Psoas muscle (tissue), 8 donors: ENCODE measurements at regions of chr3 and their contacts with region 1.

Region 1: GRCh38 chr3:65914740-65915367 is 123.9 kb downstream of the MAGI1 start:
- DNase-seq: no peak
- ATAC-seq: peak in 2 of 4 donors; percentile 39 to 55
- H3K4me3 ChIP-seq: no peak overlapping the region
- H3K27ac ChIP-seq: no peak overlapping the region
- H3K4me1 ChIP-seq: peaks cover 7% of the 10 kb centered on the region
- H3K27me3 ChIP-seq: no peaks in the 10 kb centered on the region
- CTCF ChIP-seq: peak; percentile 7

Region 2: GRCh38 chr3:65953301-65953812 is 38.5 kb after region 1 on chr3:
- intact Hi-C with region 1: loop called in 1 of 2 experiments (anchors 1 kb)
- DNase-seq: no peak
- ATAC-seq: peak; percentile 25 to 47 (median 36)
- H3K4me3 ChIP-seq: peak overlapping the region; percentile 62
- H3K27ac ChIP-seq: peak overlapping the region; percentile 64
- H3K4me1 ChIP-seq: peaks cover 29% of the 10 kb centered on the region
- H3K27me3 ChIP-seq: no peaks in the 10 kb centered on the region
- CTCF ChIP-seq: no peak

Region 3: DNA sequence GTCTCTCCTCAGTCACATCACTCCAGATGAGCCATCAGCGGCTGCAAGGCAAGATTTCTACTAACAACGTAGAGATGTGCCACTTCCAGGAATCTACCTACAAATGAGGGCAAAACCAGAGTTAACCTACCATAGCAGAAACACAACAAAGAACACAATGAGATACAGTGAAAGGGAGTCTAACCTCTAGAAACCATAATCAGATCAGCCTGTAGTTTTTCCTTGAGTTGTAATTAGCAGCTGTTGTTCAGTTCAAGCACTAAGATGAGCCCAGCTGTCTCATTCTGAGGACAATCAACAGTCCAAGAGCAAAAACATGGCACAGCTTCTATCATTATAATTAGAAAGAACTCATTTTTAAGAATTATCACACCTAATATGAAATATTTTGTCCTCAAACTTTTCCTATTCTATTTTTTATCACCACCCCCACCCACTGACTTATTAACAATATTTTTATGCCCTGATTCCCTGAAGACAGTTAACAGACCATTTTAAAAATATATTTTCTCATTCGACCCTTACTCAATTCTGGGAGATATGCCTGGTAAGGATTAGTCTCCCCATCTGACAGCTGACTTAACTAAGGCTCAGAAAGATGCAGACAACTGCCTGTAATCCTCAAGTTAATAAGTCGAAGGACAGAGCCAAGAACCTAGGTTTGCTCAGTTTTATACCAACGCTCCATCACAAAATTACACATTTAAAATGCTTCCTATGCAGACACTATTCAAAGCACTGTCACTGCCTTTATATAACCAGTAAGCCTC is 73.7 kb after region 1 on chr3:
- intact Hi-C with region 1: no loop called
- DNase-seq: no peak
- ATAC-seq: no peak
- H3K4me3 ChIP-seq: no peak overlapping the region
- H3K27ac ChIP-seq: no peak overlapping the region
- H3K4me1 ChIP-seq: no peaks in the 10 kb centered on the region
- H3K27me3 ChIP-seq: no peaks in the 10 kb centered on the region
- CTCF ChIP-seq: no peak

Region 4: GRCh38 chr3:66021731-66022141 is 106.9 kb after region 1 on chr3:
- intact Hi-C with region 1: no loop called
- DNase-seq: no peak
- ATAC-seq: no peak
- H3K4me3 ChIP-seq: no peak overlapping the region
- H3K27ac ChIP-seq: no peak overlapping the region
- H3K4me1 ChIP-seq: peaks cover 11% of the 10 kb centered on the region
- H3K27me3 ChIP-seq: no peaks in the 10 kb centered on the region
- CTCF ChIP-seq: no peak

Region 5: GRCh38 chr3:66138336-66139313 is 223.8 kb after region 1 on chr3:
- intact Hi-C with region 1: loop called in 1 of 2 experiments (anchors 10 kb)
- DNase-seq: peak in 1 of 2 donors; percentile 26
- ATAC-seq: peak; percentile 79 to 91 (median 88)
- H3K4me3 ChIP-seq: no peak overlapping the region
- H3K27ac ChIP-seq: no peak overlapping the region
- H3K4me1 ChIP-seq: peaks cover 3% of the 10 kb centered on the region
- H3K27me3 ChIP-seq: no peaks in the 10 kb centered on the region
- CTCF ChIP-seq: peak; percentile 79